CD4-positive, alpha-beta memory T cell (primary cell): ENCODE measurements at regions of chr7 and their contacts with region 1.

Region 1: GRCh38 chr7:92134271-92135051 is at the start of gene CYP51A1:
- DNase-seq: peak; percentile 94 to 97 (median 95)
- H3K4me3 ChIP-seq: peak within 1 kb of the TSS; percentile 45 to 92
- H3K4me3 Mint-ChIP-seq: peak within 1 kb of the TSS; percentile 96 to 100 (median 99)
- H3K27ac ChIP-seq: peak within 1 kb of the TSS; percentile 77
- H3K27ac Mint-ChIP-seq: peak within 1 kb of the TSS; percentile 97 to 100 (median 100)
- H3K4me1 ChIP-seq: peaks cover 19% of the 10 kb centered on the region
- H3K4me1 Mint-ChIP-seq: peaks cover 18 to 36% (median 26%) of the 10 kb centered on the region in 4 donors
- H3K27me3 ChIP-seq: no peaks in the 10 kb centered on the region
- H3K27me3 Mint-ChIP-seq: no peaks in the 10 kb centered on the region
- total RNA-seq, gene CYP51A1: 14.3 to 15.2 TPM

Region 2: GRCh38 chr7:91940572-91941341 is 193.7 kb before region 1 on chr7 and contains the start of gene AKAP9:
- CTCF ChIA-PET with region 1: no interaction called
- POLR2A ChIA-PET with region 1: interaction called, 19 read pairs
- intact Hi-C with region 1: loop called (anchors 1 kb)
- DNase-seq: peak; percentile 88 to 90 (median 89)
- H3K4me3 ChIP-seq: peak within 1 kb of the TSS; percentile 75 to 92
- H3K4me3 Mint-ChIP-seq: peak within 1 kb of the TSS; percentile 91 to 100 (median 96)
- H3K27ac ChIP-seq: peak within 1 kb of the TSS; percentile 92
- H3K27ac Mint-ChIP-seq: peak within 1 kb of the TSS; percentile 94 to 100 (median 98)
- H3K4me1 ChIP-seq: peaks cover 39% of the 10 kb centered on the region
- H3K4me1 Mint-ChIP-seq: peaks cover 22 to 59% (median 37%) of the 10 kb centered on the region in 4 donors
- H3K27me3 ChIP-seq: no peaks in the 10 kb centered on the region
- H3K27me3 Mint-ChIP-seq: peaks cover 0 to 1% of the 10 kb centered on the region in 2 donors
- total RNA-seq, gene AKAP9: 88.5 to 91.4 TPM

Region 3: GRCh38 chr7:92178927-92179924 is 44.8 kb after region 1 on chr7 and contains the start of gene LRRD1:
- CTCF ChIA-PET with region 1: no interaction called
- POLR2A ChIA-PET with region 1: interaction called, 3 read pairs
- intact Hi-C with region 1: loop called (anchors 1 kb)
- DNase-seq: peak; percentile 85 to 89 (median 88)
- H3K4me3 ChIP-seq: peak within 1 kb of the TSS in 1 of 2 donors; percentile 36
- H3K4me3 Mint-ChIP-seq: peak within 1 kb of the TSS; percentile 77 to 85 (median 80)
- H3K27ac ChIP-seq: peak within 1 kb of the TSS; percentile 2
- H3K27ac Mint-ChIP-seq: peak within 1 kb of the TSS in 4 of 7 donors; percentile 13 to 59 (median 40)
- H3K4me1 ChIP-seq: no peaks in the 10 kb centered on the region
- H3K4me1 Mint-ChIP-seq: peaks cover 2 to 8% (median 3%) of the 10 kb centered on the region in 4 donors
- H3K27me3 ChIP-seq: no peaks in the 10 kb centered on the region
- H3K27me3 Mint-ChIP-seq: no peaks in the 10 kb centered on the region
- total RNA-seq, gene LRRD1: not detected

Region 4: GRCh38 chr7:92245487-92246362 is 111.3 kb after region 1 on chr7 and contains the starts of genes ANKIB1 and KRIT1:
- CTCF ChIA-PET with region 1: interaction called, 4 read pairs
- POLR2A ChIA-PET with region 1: interaction called, 30 read pairs
- intact Hi-C with region 1: loop called (anchors 1 kb)
- DNase-seq: peak; percentile 86 to 91 (median 88)
- H3K4me3 ChIP-seq: peak within 1 kb of the TSS; percentile 91 to 98
- H3K4me3 Mint-ChIP-seq: peak within 1 kb of the TSS; percentile 94 to 100 (median 99)
- H3K27ac ChIP-seq: peak within 1 kb of the TSS; percentile 97
- H3K27ac Mint-ChIP-seq: peak within 1 kb of the TSS; percentile 98 to 100 (median 100)
- H3K4me1 ChIP-seq: peaks cover 43% of the 10 kb centered on the region
- H3K4me1 Mint-ChIP-seq: peaks cover 26 to 49% (median 37%) of the 10 kb centered on the region in 4 donors
- H3K27me3 ChIP-seq: no peaks in the 10 kb centered on the region
- H3K27me3 Mint-ChIP-seq: no peaks in the 10 kb centered on the region
- total RNA-seq, gene ANKIB1: 77.7 to 78.5 TPM
- total RNA-seq, gene KRIT1: 66.0 to 80.7 TPM

Region 5: DNA sequence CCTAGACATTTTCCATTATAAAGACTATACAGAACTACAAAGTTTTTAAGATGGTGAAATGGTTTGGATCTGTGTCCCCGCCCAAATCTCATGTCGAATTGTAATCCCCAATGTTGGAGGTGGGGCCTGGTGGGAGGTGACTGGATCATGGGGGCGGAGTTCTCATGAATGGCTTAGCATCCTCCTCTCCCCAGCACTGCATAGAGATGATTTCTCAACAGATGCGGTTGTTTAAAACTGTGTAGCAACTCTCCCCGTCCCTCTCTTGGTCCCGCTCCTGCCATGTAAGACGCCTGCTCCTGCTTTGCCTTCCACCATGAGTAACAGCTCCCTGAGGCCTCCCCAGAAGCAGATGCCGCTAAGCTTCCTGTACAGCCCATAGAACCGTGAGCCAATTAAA is 454.1 kb after region 1 on chr7:
- CTCF ChIA-PET with region 1: no interaction called
- POLR2A ChIA-PET with region 1: no interaction called
- intact Hi-C with region 1: loop called (anchors 2 kb)
- DNase-seq: peak in 1 of 5 donors; percentile 4
- H3K4me3 ChIP-seq: peak overlapping the region; percentile 82 to 98
- H3K4me3 Mint-ChIP-seq: peak overlapping the region; percentile 87 to 98 (median 96)
- H3K27ac ChIP-seq: peak overlapping the region; percentile 91
- H3K27ac Mint-ChIP-seq: peak overlapping the region; percentile 19 to 97 (median 80)
- H3K4me1 ChIP-seq: peaks cover 58% of the 10 kb centered on the region
- H3K4me1 Mint-ChIP-seq: peaks cover 41 to 72% (median 52%) of the 10 kb centered on the region in 4 donors
- H3K27me3 ChIP-seq: no peaks in the 10 kb centered on the region
- H3K27me3 Mint-ChIP-seq: no peaks in the 10 kb centered on the region

Region 6: GRCh38 chr7:93117852-93118530 is 983.5 kb after region 1 on chr7 and contains the start of gene SAMD9:
- CTCF ChIA-PET with region 1: no interaction called
- POLR2A ChIA-PET with region 1: no interaction called
- intact Hi-C with region 1: loop called (anchors 2 kb)
- DNase-seq: peak; percentile 71 to 89 (median 82)
- H3K4me3 ChIP-seq: peak within 1 kb of the TSS; percentile 65 to 96
- H3K4me3 Mint-ChIP-seq: peak within 1 kb of the TSS; percentile 88 to 94 (median 91)
- H3K27ac ChIP-seq: peak within 1 kb of the TSS; percentile 75
- H3K27ac Mint-ChIP-seq: peak within 1 kb of the TSS; percentile 80 to 96 (median 95)
- H3K4me1 ChIP-seq: peaks cover 37% of the 10 kb centered on the region
- H3K4me1 Mint-ChIP-seq: peaks cover 33 to 60% (median 49%) of the 10 kb centered on the region in 4 donors
- H3K27me3 ChIP-seq: no peaks in the 10 kb centered on the region
- H3K27me3 Mint-ChIP-seq: no peaks in the 10 kb centered on the region
- total RNA-seq, gene SAMD9: 55.1 to 56.6 TPM

Region 7: GRCh38 chr7:94004024-94004951 is 1869.8 kb after region 1 on chr7 and contains the start of gene BET1:
- CTCF ChIA-PET with region 1: no interaction called
- POLR2A ChIA-PET with region 1: no interaction called
- intact Hi-C with region 1: loop called (anchors 5 kb)
- DNase-seq: peak; percentile 91 to 96 (median 92)
- H3K4me3 ChIP-seq: peak within 1 kb of the TSS; percentile 95 to 96
- H3K4me3 Mint-ChIP-seq: peak within 1 kb of the TSS; percentile 97 to 99 (median 99)
- H3K27ac ChIP-seq: peak within 1 kb of the TSS; percentile 90
- H3K27ac Mint-ChIP-seq: peak within 1 kb of the TSS; percentile 96 to 100 (median 99)
- H3K4me1 ChIP-seq: peaks cover 22% of the 10 kb centered on the region
- H3K4me1 Mint-ChIP-seq: peaks cover 25 to 51% (median 36%) of the 10 kb centered on the region in 4 donors
- H3K27me3 ChIP-seq: no peaks in the 10 kb centered on the region
- H3K27me3 Mint-ChIP-seq: peaks cover 2 to 5% of the 10 kb centered on the region in 2 donors
- total RNA-seq, gene BET1: 40.8 to 45.7 TPM